ENCODE measurements at regions of chr11 and their contacts with region 1.

Region 1: DNA sequence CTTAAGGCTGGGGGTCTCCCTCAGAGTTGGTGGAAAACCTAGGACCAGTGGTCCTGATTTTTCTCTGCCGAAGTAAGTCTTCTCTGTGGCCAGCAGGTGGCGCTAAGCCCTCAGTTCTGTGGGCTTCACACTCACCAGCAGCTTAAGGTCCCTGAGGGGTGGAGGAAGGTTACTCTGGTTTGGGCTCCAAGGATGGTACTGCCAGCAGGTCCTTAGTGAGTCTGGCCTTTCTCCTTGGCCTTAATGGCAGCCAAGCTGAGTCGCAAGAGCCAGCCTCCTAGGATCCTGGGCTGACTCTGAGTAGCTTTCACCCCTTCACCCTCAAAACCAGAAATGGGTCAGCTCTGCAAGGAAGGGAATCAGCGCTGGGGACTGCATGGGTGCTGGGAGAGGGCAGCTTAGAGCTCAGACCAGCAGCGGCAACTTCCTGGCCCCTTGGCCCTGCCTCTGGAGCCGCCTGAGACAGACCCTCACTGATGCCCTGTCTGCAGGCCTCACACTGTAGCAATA is 4.4 kb downstream of the KCNJ11 start:
- DNase-seq: no peak
- H3K4me3 ChIP-seq: no peak overlapping the region
- H3K27me3 ChIP-seq: no peaks in the 10 kb centered on the region
- CTCF ChIP-seq: peak; percentile 92

Region 2: DNA sequence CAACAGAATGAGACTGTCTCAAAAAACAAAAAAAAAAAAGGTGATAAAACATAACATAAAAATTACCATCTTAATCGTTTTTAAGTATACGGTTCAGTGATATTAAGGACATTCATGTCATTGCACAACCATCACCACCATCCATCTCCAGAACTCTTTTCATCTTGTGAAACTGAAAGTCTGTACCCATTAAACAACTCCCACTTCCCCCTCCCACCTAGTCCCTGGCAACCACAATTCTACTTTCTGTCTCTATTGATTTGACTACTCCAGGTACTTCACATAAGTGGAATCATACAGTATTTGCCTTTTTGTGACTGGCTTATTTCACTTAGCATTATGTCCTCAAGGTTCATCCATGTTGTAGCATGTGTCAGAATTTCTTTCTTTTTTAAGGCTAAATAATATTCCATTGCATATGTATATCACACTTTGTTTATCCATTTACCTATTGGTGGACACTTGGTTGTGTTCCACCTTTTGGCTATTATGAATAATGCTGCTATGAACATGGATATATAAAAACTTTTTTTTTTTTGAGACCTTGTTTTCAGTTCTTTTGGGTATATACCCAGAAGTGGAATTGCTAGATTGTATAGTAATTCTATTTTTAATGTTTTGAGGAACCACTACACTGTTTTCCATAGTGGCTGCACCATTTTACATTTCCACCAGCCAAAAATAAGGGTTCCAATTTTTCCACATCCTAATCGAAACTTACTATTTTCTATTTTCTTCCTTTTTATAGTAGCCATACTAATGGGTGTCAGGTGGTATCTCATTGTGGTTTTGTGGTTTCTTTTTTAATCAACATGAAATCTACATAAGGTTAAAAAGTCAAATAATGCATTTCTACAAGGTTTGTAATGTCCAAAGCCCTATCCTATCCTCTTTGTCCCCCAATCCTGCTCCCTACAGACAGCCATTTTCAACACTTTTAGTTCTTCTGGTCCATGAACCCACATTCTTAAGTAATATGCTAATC is 152.9 kb before region 1 on chr11:
- CTCF ChIA-PET with region 1: interaction called, 26 read pairs
- POLR2A ChIA-PET with region 1: no interaction called
- DNase-seq: no peak
- H3K4me3 ChIP-seq: no peak overlapping the region
- H3K27me3 ChIP-seq: no peaks in the 10 kb centered on the region
- CTCF ChIP-seq: no peak

Region 3: GRCh38 chr11:17328871-17329494 is 55.1 kb before region 1 on chr11:
- CTCF ChIA-PET with region 1: no interaction called
- POLR2A ChIA-PET with region 1: no interaction called
- DNase-seq: no peak
- H3K4me3 ChIP-seq: no peak overlapping the region
- H3K27me3 ChIP-seq: no peaks in the 10 kb centered on the region
- CTCF ChIP-seq: no peak

Region 4: GRCh38 chr11:17343257-17343656 is 40.8 kb before region 1 on chr11:
- CTCF ChIA-PET with region 1: no interaction called
- POLR2A ChIA-PET with region 1: no interaction called
- DNase-seq: no peak
- H3K4me3 ChIP-seq: no peak overlapping the region
- H3K27me3 ChIP-seq: no peaks in the 10 kb centered on the region
- CTCF ChIP-seq: no peak

Region 5: DNA sequence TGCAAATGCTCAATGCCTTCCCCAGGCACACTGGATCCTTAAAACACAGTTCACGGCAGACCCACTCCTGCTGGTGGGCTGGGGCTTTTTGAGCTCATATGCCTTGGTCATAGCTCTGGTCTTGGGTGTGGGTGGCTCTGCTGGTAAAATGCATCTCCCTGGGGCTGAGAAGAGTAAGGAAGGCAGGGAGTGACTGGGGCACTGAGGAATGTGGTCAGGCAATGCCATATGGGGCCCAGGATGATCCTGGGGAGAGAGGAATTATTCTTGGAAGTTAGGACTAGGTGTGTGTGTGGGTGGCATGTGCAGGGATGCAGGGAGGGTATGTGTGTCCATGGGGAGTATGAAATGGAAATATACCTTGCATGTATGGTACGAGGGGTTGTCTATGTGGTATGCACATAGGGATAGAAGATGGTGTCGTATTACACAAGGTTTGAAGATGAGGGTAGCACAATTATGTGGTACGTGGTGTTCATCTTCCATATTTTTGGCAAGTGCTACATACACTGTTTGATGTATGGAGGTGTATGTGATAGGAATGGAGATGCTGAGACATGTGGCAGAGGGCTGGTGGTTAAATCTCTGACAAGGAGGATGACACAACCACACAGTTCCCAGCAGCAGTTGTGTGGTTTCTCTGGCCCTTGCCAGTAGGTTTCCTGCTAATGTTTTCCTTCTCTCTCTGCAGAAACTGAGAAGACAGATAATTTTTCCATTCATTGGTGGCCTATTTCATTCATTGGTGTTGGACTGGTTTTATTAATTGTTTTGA is 15.7 kb before region 1 on chr11:
- CTCF ChIA-PET with region 1: interaction called, 43 read pairs
- POLR2A ChIA-PET with region 1: no interaction called
- DNase-seq: no peak
- H3K4me3 ChIP-seq: no peak overlapping the region
- H3K27me3 ChIP-seq: no peaks in the 10 kb centered on the region
- CTCF ChIP-seq: no peak

Region 6: GRCh38 chr11:17494019-17494418 is 110.0 kb after region 1 on chr11:
- CTCF ChIA-PET with region 1: interaction called, 17 read pairs
- POLR2A ChIA-PET with region 1: no interaction called
- DNase-seq: no peak
- H3K4me3 ChIP-seq: no peak overlapping the region
- H3K27me3 ChIP-seq: peaks cover 9% of the 10 kb centered on the region; the same call in 1 of the 2 replicates
- CTCF ChIP-seq: no peak

Region 7: DNA sequence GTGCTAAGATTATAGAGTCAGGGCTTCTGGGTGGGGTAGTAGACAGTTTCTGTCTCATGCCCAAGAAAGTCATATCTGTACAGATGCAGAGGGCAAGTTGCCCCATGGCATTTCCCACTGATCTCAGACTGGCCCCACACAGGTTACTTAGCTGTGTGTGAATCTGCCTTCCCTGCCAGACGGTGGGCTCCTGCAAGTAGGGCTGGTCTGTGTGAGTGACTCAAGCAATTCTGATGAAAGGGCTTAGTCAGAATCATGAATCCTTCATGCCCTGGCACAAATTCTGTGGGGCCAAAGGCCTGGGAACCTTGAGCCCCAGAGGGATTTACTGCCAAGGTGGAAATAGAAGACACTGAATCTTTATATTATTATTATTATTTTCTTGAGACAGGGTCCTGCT is 129.8 kb after region 1 on chr11:
- CTCF ChIA-PET with region 1: interaction called, 101 read pairs
- POLR2A ChIA-PET with region 1: no interaction called
- DNase-seq: no peak
- H3K4me3 ChIP-seq: no peak overlapping the region
- H3K27me3 ChIP-seq: peaks cover 9% of the 10 kb centered on the region
- CTCF ChIP-seq: no peak

Region 8: DNA sequence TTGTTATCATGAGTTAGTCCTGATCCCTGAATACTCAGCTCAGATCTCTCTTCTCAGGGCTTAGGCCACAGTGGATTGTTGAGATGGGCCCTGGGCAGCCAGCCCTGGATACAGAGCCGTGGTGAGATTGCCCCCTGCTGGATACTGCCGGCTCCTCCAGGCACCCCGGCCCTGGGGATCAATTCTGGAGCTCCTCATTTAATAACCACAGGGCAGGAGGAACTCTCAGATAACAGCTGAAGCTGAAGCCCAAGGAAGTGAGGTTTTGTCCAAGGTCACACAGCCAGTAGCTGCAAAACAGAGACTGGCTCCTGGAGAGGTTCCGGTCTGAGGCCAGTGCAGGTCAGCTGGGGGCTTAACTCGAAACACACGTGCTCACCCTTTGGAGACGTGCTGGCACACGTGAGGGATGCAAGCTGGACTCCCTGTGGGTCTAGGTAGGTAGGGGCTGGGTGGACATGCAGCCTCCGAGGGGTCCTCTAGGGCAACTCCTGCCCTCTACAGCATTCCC is 144.2 kb after region 1 on chr11:
- CTCF ChIA-PET with region 1: interaction called, 21 read pairs
- POLR2A ChIA-PET with region 1: no interaction called
- DNase-seq: no peak
- H3K4me3 ChIP-seq: no peak overlapping the region
- H3K27me3 ChIP-seq: peaks cover 7% of the 10 kb centered on the region
- CTCF ChIP-seq: peak; percentile 75

Measured in BJ (cell line).